ENCODE measurements at regions of chr13 and their contacts with region 1.

Region 1: DNA sequence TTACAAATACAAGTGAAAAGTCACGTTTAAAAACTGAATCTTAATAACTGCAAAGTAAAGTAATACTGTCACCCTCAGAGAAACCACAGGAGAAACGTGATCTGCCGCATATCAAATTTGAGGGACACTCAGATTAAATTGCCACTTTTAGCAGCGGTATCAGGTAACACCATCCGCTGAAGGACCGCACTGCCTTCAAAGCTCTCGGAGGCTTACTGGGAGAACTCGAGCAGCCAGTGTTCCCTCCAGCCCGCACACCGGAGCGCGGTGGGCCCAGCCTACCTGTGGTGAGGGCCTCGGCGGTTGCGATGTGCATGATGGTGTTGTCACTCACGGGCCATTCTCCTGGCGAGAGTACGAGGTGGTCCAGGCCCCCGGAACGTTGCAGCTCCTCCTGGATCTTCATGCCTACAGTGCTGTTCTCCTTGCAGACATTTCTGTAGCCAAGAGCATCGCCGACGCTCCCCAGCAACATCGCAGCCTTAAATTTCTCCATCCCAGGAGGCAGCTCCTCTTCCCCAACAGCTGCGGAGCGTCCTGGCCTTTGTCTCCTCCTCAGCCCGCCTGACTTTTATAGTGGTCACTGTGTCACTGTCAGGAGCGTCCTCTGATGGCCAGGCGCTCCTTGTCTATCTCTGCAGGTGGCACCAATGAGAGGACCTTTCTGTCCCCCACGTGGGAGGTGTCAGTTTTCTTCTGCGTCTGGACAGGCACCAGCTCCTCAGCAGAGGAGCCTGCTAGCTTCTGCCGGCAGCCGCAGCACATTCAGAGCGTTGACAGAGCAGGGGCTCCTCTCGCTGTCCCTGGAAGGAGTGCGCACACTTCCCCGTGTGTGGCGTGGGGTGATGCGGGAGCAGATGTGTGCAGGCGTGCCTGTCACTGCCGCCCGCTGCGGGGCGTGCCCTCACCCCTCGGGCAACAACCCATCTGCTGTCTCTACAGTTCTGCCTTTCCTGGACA is at the start of gene ADPRHL1:
- DNase-seq: no peak
- ATAC-seq: no peak
- H3K4me3 Mint-ChIP-seq: no peak within 1 kb of the TSS
- H3K27ac Mint-ChIP-seq: peak within 1 kb of the TSS; percentile 80
- H3K4me1 Mint-ChIP-seq: peaks cover 5% of the 10 kb centered on the region; the same call in 1 of the 2 replicates
- H3K27me3 Mint-ChIP-seq: no peaks in the 10 kb centered on the region
- CTCF ChIP-seq: no peak
- total RNA-seq, gene ADPRHL1: 1.0 to 1.5 TPM (median 1.4 TPM) in 3 replicates

Region 2: GRCh38 chr13:113428021-113428441 is 25.2 kb before region 1 on chr13:
- CTCF ChIA-PET with region 1: interaction called, 11 read pairs
- POLR2A ChIA-PET with region 1: no interaction called
- DNase-seq: no peak
- ATAC-seq: no peak
- H3K4me3 Mint-ChIP-seq: no peak overlapping the region
- H3K27ac Mint-ChIP-seq: peak overlapping the region; percentile 68; the same call in 1 of the 2 replicates
- H3K4me1 Mint-ChIP-seq: no peaks in the 10 kb centered on the region
- H3K27me3 Mint-ChIP-seq: no peaks in the 10 kb centered on the region
- CTCF ChIP-seq: no peak

Region 3: GRCh38 chr13:113442985-113443362 is 10.2 kb before region 1 on chr13:
- CTCF ChIA-PET with region 1: no interaction called
- POLR2A ChIA-PET with region 1: no interaction called
- DNase-seq: no peak
- ATAC-seq: no peak
- H3K4me3 Mint-ChIP-seq: no peak overlapping the region
- H3K27ac Mint-ChIP-seq: no peak overlapping the region
- H3K4me1 Mint-ChIP-seq: no peaks in the 10 kb centered on the region
- H3K27me3 Mint-ChIP-seq: no peaks in the 10 kb centered on the region
- CTCF ChIP-seq: no peak

Region 4: GRCh38 chr13:113490496-113491417 is 37.5 kb after region 1 on chr13 and contains the start of gene DCUN1D2:
- CTCF ChIA-PET with region 1: interaction called, 22 read pairs
- POLR2A ChIA-PET with region 1: interaction called, 3 read pairs
- DNase-seq: peak; percentile 88
- ATAC-seq: peak; percentile 70
- H3K4me3 Mint-ChIP-seq: peak within 1 kb of the TSS; percentile 86
- H3K27ac Mint-ChIP-seq: peak within 1 kb of the TSS; percentile 77
- H3K4me1 Mint-ChIP-seq: peaks cover 75% of the 10 kb centered on the region
- H3K27me3 Mint-ChIP-seq: no peaks in the 10 kb centered on the region
- CTCF ChIP-seq: no peak
- total RNA-seq, gene DCUN1D2: 34.0 to 42.5 TPM (median 36.0 TPM) in 3 replicates